Colonic mucosa (tissue), 4 donors: ENCODE measurements at regions of chr12 and their contacts with region 1.

Region 1: DNA sequence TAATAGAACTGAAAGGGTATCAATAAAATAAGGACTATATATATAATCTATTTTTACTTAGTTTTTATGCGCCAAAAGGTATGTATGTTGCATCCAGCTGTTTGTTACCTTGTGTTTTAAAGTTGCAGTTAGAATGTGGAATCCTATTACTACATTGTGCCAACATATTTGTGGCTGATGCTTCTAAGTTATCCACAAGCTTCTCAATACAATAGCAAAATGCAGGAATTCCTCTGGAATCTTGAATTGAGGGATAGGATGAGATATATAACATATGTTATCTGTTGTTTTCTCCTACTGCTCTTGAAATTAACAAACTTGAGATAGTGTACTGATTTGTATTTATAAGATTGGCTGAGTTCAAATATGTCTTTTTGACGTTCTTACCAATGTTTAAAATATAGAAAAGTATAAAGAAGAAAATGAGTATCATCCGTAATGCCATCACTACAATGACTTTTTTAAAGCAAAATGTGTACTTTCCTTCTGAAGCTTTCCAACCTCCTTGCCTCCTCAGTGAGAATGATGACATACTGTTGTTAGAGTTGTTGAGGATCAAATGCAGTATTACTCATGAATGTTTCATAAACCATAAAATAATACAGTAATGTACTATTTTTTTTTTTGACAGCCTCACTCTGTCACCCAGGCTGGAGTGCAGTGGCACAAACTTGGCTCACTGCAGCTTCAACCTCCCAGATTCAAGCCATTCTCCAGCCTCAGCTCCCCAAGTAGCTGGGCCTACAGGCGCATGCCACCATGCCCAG is 6.6 kb downstream of the RAP1B start:
- DNase-seq: no peak
- H3K4me3 ChIP-seq: no peak overlapping the region
- H3K27ac ChIP-seq: no peak overlapping the region
- H3K4me1 ChIP-seq: peaks cover 23% of the 10 kb centered on the region
- H3K27me3 ChIP-seq: no peaks in the 10 kb centered on the region
- CTCF ChIP-seq: no peak

Region 2: GRCh38 chr12:68675101-68675842 is 57.9 kb after region 1 on chr12:
- intact Hi-C with region 1: loop called (anchors 5 kb)
- DNase-seq: peak; percentile 35
- H3K4me3 ChIP-seq: no peak overlapping the region
- H3K27ac ChIP-seq: no peak overlapping the region
- H3K4me1 ChIP-seq: no peaks in the 10 kb centered on the region
- H3K27me3 ChIP-seq: no peaks in the 10 kb centered on the region
- CTCF ChIP-seq: no peak